ENCODE measurements at regions of chr3 and their contacts with region 1.

Region 1: DNA sequence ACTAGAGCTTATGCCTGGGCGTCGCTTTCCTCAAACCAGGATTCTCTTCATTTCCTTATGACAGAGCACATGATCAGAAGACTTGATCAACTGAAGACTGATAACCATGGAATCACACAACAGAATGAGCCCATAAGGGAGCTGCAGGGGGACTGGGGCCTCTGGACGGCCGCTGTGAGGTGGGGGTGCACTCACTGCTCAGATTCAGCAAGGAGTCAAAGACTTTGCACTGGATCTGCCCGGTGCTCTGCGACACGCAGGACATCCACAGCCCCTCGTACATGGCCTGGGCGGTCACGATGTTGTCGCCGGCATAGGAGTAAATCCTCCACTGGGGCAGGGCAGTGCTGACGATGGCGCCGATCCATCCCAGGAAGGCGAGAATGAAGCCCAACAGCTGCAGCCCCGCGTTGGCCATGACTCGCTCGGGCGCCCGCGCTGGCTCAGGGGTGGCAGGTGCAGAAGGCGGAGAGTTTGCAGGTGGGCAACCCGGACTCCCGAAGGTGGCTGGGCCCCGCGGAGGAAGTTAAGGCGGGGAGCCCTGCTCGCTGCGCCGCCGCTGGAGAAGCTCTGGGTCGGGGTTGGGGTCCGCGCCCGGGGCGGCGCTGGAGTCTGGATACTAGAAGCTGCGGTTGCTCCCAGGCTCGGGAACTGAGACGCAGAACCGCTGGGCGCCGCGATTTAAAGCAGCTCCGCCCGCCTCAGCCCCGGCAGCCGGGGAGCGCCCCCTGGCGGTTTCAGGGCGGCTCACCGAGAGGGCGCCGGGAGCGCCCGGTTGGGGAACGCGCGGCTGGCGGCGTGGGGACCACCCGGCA is at the start of gene CLDN1:
- DNase-seq: peak; percentile 59 to 80
- ATAC-seq: peak; percentile 86 to 95
- H3K4me3 ChIP-seq: peak within 1 kb of the TSS; percentile 81
- H3K27ac ChIP-seq: peak within 1 kb of the TSS; percentile 87 to 90
- H3K4me1 ChIP-seq: peaks cover 37% of the 10 kb centered on the region; the same call in 2 of the 3 replicates
- CTCF ChIP-seq: peak; percentile 84
- EP300 ChIP-seq: no peak
- POLR2A ChIP-seq: peak; percentile 55
- RAD21 ChIP-seq: peak; percentile 68 to 87
- polyA plus RNA-seq, gene CLDN1: 97.0 and 142 TPM in 2 replicates

Region 2: DNA sequence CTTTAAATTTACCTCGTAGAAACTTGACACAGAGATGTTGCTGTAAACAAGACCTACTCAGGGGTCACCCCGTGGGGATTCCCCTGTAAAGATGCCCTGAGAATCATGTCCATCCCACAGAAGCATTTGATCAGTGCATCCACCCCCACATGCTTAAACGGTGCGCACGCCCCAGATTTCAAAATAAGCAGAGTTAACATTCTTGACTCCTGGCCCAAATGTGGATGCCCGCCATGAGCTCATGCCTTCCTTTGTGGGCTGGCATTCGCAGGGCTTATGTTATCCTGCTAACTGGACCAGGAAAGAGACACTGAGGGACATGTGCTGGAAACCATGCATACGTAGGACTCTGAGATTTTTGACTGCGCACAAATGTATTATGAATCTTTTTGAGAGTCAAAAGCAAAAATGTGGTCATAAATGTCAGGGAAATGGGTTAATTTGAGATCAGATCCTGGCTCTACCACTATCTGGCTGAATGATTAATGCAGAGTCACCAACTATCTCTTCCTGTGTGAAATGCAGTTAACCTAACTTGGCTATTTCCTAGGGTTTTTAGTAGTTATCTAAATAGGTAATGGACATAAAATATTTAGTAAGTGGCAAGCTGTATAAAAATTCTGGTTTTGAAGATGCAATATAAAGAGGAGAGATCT is 699.9 kb before region 1 on chr3:
- CTCF ChIA-PET with region 1: no interaction called
- POLR2A ChIA-PET with region 1: no interaction called
- DNase-seq: no peak
- ATAC-seq: no peak
- H3K4me3 ChIP-seq: no peak overlapping the region
- H3K27ac ChIP-seq: no peak overlapping the region
- H3K4me1 ChIP-seq: no peaks in the 10 kb centered on the region
- CTCF ChIP-seq: no peak
- EP300 ChIP-seq: no peak
- POLR2A ChIP-seq: no peak
- RAD21 ChIP-seq: no peak

Region 3: GRCh38 chr3:190217081-190217480 is 104.9 kb before region 1 on chr3:
- CTCF ChIA-PET with region 1: interaction called, 105 read pairs
- POLR2A ChIA-PET with region 1: no interaction called
- DNase-seq: no peak
- ATAC-seq: no peak
- H3K4me3 ChIP-seq: no peak overlapping the region
- H3K27ac ChIP-seq: no peak overlapping the region
- H3K4me1 ChIP-seq: no peaks in the 10 kb centered on the region
- CTCF ChIP-seq: no peak
- EP300 ChIP-seq: no peak
- POLR2A ChIP-seq: no peak
- RAD21 ChIP-seq: no peak

Region 4: DNA sequence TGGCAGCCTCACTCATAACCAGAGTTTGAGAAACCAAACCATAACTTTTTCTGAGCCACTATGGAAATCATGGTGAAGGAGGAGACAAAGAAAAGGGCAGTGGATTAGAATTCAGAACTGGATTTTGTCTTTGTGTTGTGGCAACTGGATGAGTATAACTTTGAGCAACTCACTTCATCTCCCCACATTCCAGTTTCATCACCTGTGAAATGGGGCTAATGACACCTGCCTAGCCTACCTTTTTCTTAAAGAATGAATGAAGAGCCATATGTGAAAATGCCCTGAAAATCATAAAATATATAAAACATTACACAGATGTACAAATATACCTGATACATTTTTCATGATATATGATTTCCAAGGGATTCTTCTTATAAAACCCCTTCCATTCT is 91.6 kb before region 1 on chr3:
- CTCF ChIA-PET with region 1: interaction called, 105 read pairs
- POLR2A ChIA-PET with region 1: interaction called, 13 read pairs
- DNase-seq: no peak
- ATAC-seq: no peak
- H3K4me3 ChIP-seq: no peak overlapping the region
- H3K27ac ChIP-seq: peak overlapping the region; percentile 70 to 87
- H3K4me1 ChIP-seq: peaks cover 38% of the 10 kb centered on the region
- CTCF ChIP-seq: no peak
- EP300 ChIP-seq: 0 out of 5 replicates have a peak, but pooled peaks of 1 of the 2 experiments have one; percentile 11
- POLR2A ChIP-seq: no peak
- RAD21 ChIP-seq: 0 out of 5 replicates have a peak, but pooled peaks of 1 of the 2 experiments have one; percentile 0

Region 5: GRCh38 chr3:190288836-190289235 is 33.2 kb before region 1 on chr3:
- CTCF ChIA-PET with region 1: no interaction called
- POLR2A ChIA-PET with region 1: no interaction called
- DNase-seq: no peak
- ATAC-seq: no peak
- H3K4me3 ChIP-seq: no peak overlapping the region
- H3K27ac ChIP-seq: no peak overlapping the region
- H3K4me1 ChIP-seq: no peaks in the 10 kb centered on the region
- CTCF ChIP-seq: no peak
- EP300 ChIP-seq: no peak
- POLR2A ChIP-seq: no peak
- RAD21 ChIP-seq: no peak

Region 6: GRCh38 chr3:190339130-190339529 is 17.1 kb after region 1 on chr3:
- CTCF ChIA-PET with region 1: interaction called, 74 read pairs
- POLR2A ChIA-PET with region 1: interaction called, 27 read pairs
- DNase-seq: no peak
- ATAC-seq: peak in 1 of 2 experiments; percentile 57; a peak in 3 of 6 replicates
- H3K4me3 ChIP-seq: no peak overlapping the region
- H3K27ac ChIP-seq: peak overlapping the region in 1 of 2 experiments; percentile 47; a peak in 2 of 6 replicates
- H3K4me1 ChIP-seq: peaks cover 12% of the 10 kb centered on the region
- CTCF ChIP-seq: peak; percentile 5; the same call in 1 of the 3 replicates
- EP300 ChIP-seq: no peak
- POLR2A ChIP-seq: no peak
- RAD21 ChIP-seq: no peak

Region 7: GRCh38 chr3:190378240-190378891 is 56.4 kb after region 1 on chr3:
- CTCF ChIA-PET with region 1: interaction called, 33 read pairs
- POLR2A ChIA-PET with region 1: no interaction called
- DNase-seq: peak in 1 of 2 experiments; percentile 48
- ATAC-seq: peak in 1 of 2 experiments; percentile 36; a peak in 1 of 6 replicates
- H3K4me3 ChIP-seq: no peak overlapping the region
- H3K27ac ChIP-seq: peak overlapping the region in 1 of 2 experiments; percentile 68; a peak in 3 of 6 replicates
- H3K4me1 ChIP-seq: peaks cover 35% of the 10 kb centered on the region
- CTCF ChIP-seq: no peak
- EP300 ChIP-seq: no peak
- POLR2A ChIP-seq: no peak
- RAD21 ChIP-seq: no peak

Region 8: GRCh38 chr3:190424478-190425439 is 102.8 kb after region 1 on chr3:
- CTCF ChIA-PET with region 1: interaction called, 11 read pairs
- POLR2A ChIA-PET with region 1: interaction called, 5 read pairs
- DNase-seq: peak; percentile 21 to 78
- ATAC-seq: peak; percentile 70 to 72; a peak in 5 of 6 replicates
- H3K4me3 ChIP-seq: no peak overlapping the region
- H3K27ac ChIP-seq: peak overlapping the region; percentile 32 to 60; a peak in 3 of 6 replicates
- H3K4me1 ChIP-seq: peaks cover 3% of the 10 kb centered on the region; the same call in 1 of the 3 replicates
- CTCF ChIP-seq: peak; percentile 56; the same call in 2 of the 3 replicates
- EP300 ChIP-seq: no peak
- POLR2A ChIP-seq: no peak
- RAD21 ChIP-seq: peak; percentile 65 to 68

Measured in A549 (cell line).